ENCODE measurements at regions of chr5 and their contacts with region 1.

Region 1: GRCh38 chr5:88690409-88691229 is 192.4 kb downstream of the MEF2C start:
- DNase-seq: peak; percentile 44 to 75
- ATAC-seq: peak; percentile 75 to 90 (median 83)
- H3K4me3 ChIP-seq: peak overlapping the region; percentile 53
- H3K27ac ChIP-seq: no peak overlapping the region
- H3K4me1 ChIP-seq: peaks cover 21% of the 10 kb centered on the region
- H3K27me3 ChIP-seq: peaks cover 6 to 100% (median 65%) of the 10 kb centered on the region in 3 donors
- CTCF ChIP-seq: peak; percentile 95

Region 2: GRCh38 chr5:87780831-87781760 is 909.5 kb before region 1 on chr5:
- intact Hi-C with region 1: loop called (anchors 2 to 5 kb)
- DNase-seq: peak; percentile 62 to 87
- ATAC-seq: peak; percentile 87 to 99 (median 93)
- H3K4me3 ChIP-seq: no peak overlapping the region
- H3K27ac ChIP-seq: no peak overlapping the region
- H3K4me1 ChIP-seq: no peaks in the 10 kb centered on the region
- H3K27me3 ChIP-seq: peaks cover 0 to 12% (median 0%) of the 10 kb centered on the region in 3 donors
- CTCF ChIP-seq: peak; percentile 94